ENCODE measurements at regions of chr19 and their contacts with region 1.

Region 1: GRCh38 chr19:45323671-45324081 is 1.0 kb upstream of the CKM start:
- DNase-seq: peak; percentile 89

Region 2: DNA sequence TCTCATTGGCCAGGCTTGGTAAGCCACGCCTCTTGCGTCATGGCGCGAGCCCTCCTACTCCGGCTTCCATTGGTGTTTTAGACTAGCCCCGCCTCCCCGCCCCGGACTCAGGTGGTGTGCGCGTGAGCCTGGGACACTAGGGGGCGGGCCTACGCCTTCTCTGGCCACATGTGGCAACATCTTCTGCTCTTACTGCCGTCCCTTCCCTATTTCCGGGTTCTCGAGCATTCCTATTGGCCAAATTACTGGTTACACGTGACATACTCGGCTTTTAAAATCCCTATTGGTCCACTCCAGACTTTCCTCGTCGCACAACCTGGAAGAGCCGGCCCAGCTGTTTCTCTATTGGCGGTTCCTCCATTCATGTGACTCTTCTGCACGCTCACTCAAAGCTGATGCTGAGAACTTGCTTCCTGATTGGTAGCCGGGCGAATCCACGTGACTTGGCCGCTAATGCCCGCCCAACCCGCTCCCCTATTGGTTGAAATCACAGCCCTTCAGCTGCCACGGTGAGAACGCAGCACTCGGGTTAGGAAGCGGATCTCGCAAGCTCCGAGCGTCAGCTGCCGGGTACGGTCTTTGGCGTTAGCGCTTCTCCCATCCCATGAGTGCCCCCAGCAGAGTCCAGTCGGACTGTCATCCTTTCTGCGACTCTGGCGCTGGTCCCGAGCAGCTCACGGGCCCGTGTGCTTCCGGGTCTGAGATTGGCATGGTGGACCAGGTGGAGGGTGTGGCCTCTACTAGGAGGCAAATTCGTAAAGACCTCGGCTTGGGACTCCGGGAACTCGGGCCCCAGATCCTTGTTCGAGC is 145.2 kb before region 1 on chr19 and contains the start of gene BLOC1S3:
- intact Hi-C with region 1: no loop called
- DNase-seq: peak; percentile 100
- total RNA-seq, gene BLOC1S3: 5.0 TPM

Region 3: GRCh38 chr19:45294291-45295029 is 29.2 kb before region 1 on chr19:
- intact Hi-C with region 1: loop called (anchors 2 kb)
- DNase-seq: peak; percentile 82

Region 4: DNA sequence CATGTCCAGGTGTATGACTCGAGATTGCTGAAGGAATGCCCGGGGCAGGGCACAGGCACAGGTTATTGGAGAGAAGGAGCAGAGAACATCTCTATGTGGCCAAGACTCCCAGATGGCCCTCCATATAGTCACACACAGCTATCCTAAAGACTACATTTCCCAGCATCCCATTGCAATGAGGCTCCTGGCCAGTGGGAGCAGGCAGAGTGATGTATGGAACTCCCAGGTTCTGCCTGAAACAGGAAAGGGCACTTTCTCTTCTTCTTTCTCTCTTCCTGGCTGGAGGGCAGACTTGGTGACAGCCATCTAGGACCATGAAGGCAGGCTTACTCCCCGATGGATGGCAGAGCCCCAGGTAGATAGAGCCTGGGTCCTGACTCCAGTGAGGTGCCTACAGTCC is 67.7 kb after region 1 on chr19:
- intact Hi-C with region 1: no loop called
- DNase-seq: no peak

Measured in cardiac septum (tissue), 1 donor.